ENCODE measurements at regions of chr9 and their contacts with region 1.

Region 1: DNA sequence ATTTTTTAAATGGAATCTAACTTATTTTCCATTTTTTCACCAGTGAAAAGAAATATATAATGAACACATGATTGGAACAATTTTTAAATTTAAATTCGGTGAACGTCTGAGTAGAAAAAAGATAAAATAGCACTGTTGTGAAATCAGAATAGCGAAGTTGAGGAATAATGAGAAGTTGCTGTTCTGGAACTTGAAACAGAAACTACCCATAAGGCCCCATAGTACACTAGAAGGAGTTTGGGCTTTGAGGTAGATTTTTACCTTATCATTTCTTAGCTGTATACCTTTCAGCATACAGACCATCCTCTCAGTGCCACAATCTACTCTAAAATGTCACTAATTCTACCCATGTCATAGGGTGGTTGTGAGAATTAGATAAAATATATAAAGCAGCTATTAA is 35.1 kb downstream of the TDRD7 start:
- DNase-seq: no peak
- ATAC-seq: no peak
- H3K4me3 ChIP-seq: no peak overlapping the region
- H3K27ac ChIP-seq: no peak overlapping the region
- H3K4me1 ChIP-seq: no peaks in the 10 kb centered on the region
- H3K27me3 ChIP-seq: no peaks in the 10 kb centered on the region
- CTCF ChIP-seq: no peak
- POLR2A ChIP-seq: no peak
- RAD21 ChIP-seq: no peak

Region 2: DNA sequence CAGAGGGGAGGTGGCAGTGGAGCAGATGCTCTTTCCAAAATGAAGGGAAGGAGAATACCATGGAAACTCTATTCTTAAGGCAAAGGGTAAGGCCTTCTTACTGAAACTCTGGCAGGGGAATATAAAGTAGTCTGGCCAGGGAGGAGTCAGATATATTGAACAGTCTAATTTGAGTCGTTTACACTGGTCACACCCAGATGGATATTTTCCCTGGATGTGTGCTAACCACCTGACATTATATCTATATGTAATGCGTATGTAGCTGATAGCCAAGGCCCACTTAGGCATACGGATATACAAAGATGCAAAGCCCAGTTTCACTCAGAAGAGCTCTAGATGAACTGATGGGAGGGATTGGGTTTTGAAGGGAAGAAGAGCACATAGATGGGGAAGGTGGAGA is 28.1 kb before region 1 on chr9:
- CTCF ChIA-PET with region 1: no interaction called
- POLR2A ChIA-PET with region 1: no interaction called
- dilution Hi-C with region 1: no loop called
- in situ Hi-C with region 1: no loop called
- intact Hi-C with region 1: loop called (anchors 1 kb)
- DNase-seq: no peak
- ATAC-seq: no peak
- H3K4me3 ChIP-seq: no peak overlapping the region
- H3K27ac ChIP-seq: no peak overlapping the region
- H3K4me1 ChIP-seq: peaks cover 5% of the 10 kb centered on the region
- H3K27me3 ChIP-seq: no peaks in the 10 kb centered on the region
- CTCF ChIP-seq: no peak
- POLR2A ChIP-seq: no peak
- RAD21 ChIP-seq: no peak